Aorta (tissue), 5 donors: ENCODE measurements at regions of chr3 and their contacts with region 1.

Region 1: GRCh38 chr3:129560901-129561594 is 18.1 kb downstream of the H1-8 start:
- DNase-seq: peak; percentile 93 to 95
- ATAC-seq: peak; percentile 86
- H3K4me3 ChIP-seq: no peak overlapping the region
- H3K27ac ChIP-seq: peak overlapping the region; percentile 67 to 83
- H3K4me1 ChIP-seq: no peaks in the 10 kb centered on the region
- H3K27me3 ChIP-seq: no peaks in the 10 kb centered on the region

Region 2: GRCh38 chr3:129490242-129491045 is 70.6 kb before region 1 on chr3:
- intact Hi-C with region 1: loop called in 1 of 2 experiments (anchors 5 kb)
- DNase-seq: peak; percentile 92 to 95
- ATAC-seq: peak; percentile 92
- H3K4me3 ChIP-seq: no peak overlapping the region
- H3K27ac ChIP-seq: peak overlapping the region; percentile 62 to 86
- H3K4me1 ChIP-seq: peaks cover 0 to 2% of the 10 kb centered on the region in 2 donors
- H3K27me3 ChIP-seq: no peaks in the 10 kb centered on the region

Region 3: DNA sequence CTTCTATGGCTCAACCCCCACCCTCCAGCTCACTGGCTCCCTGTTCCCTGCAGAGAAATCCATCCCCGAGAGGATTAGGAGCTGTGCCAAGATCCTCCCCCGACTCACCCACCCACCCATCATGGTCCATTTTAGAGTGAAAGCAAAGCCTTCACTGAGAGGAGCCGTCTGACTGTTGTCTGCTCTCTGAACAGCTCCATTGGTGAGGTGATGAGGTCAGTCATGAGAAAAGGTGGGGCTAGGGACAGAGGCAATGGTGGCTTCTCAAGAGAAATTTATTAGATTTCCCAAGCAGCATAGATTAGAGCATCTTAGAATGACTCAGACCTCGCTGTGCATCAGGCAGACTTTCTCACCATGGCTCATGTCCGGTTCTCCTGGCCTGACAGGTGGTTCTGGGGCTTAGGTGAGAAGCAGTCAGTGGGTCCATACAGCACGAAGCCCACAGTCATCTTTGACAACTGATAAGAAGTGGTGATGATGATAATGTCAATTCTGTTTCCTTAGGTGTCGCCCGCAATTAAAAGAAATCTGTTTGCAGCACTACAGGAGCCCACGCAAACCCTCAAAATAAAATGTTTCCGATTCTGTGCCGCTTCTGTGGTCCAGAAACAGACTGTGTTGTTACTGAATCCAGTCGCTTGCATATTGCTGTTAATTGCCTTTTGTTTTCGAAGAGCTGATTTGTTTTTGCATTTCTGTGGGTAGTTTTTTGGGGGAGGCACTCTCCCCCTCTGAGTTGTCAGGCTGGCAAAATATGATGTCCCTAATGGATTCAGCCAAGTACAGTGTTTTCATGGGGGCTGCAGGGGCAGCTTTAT is 57.4 kb before region 1 on chr3:
- intact Hi-C with region 1: loop called in 1 of 2 experiments (anchors 5 kb)
- DNase-seq: no peak
- ATAC-seq: no peak
- H3K4me3 ChIP-seq: no peak overlapping the region
- H3K27ac ChIP-seq: no peak overlapping the region
- H3K4me1 ChIP-seq: no peaks in the 10 kb centered on the region
- H3K27me3 ChIP-seq: no peaks in the 10 kb centered on the region

Region 4: DNA sequence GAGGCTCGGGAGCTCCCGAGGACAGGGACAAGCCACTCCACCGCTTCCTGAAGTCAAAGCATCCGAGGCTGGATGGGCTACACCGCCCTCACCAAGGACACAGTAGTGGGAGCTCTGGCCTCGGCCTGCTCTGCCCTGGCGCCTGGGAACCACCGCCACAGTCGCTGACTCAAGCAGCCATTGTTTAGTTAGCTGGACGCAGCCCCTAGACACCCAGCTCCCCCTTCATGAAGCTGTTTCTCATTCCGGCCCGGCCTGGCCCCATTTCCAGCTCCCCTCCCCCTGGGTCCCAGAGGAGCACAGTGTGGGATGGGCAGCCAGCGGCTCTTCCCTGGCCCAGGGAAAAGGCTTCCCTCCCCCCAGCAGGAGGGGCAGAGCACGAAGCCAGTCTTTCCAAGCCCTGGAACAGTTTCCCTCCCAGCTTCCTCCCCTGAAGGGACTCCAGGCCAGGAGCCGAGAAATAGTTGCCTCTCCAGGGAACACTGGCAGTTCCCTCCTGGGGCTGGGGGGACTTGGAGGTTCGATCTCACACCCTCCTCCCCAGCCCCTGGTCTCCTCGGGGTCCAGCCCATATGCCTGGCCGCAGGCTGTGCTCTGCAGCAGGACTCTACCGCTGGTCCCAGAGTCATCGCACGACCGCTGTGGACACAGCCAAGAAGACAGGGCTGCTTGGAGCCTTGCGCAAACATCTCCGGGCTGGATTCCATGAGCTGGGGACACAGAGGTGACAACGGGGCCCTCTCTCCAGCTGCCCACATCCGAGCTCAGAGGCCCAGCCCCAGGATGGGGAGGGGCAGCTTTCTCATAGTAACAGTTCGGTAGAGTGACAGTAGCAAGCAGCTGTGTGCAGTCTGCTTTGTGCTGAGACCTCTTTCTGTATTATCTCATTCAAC is 35.4 kb after region 1 on chr3:
- intact Hi-C with region 1: loop called (anchors 2 to 5 kb)
- DNase-seq: peak; percentile 94 to 96
- ATAC-seq: peak; percentile 88
- H3K4me3 ChIP-seq: no peak overlapping the region
- H3K27ac ChIP-seq: peak overlapping the region; percentile 6 to 79
- H3K4me1 ChIP-seq: no peaks in the 10 kb centered on the region
- H3K27me3 ChIP-seq: no peaks in the 10 kb centered on the region

Region 5: DNA sequence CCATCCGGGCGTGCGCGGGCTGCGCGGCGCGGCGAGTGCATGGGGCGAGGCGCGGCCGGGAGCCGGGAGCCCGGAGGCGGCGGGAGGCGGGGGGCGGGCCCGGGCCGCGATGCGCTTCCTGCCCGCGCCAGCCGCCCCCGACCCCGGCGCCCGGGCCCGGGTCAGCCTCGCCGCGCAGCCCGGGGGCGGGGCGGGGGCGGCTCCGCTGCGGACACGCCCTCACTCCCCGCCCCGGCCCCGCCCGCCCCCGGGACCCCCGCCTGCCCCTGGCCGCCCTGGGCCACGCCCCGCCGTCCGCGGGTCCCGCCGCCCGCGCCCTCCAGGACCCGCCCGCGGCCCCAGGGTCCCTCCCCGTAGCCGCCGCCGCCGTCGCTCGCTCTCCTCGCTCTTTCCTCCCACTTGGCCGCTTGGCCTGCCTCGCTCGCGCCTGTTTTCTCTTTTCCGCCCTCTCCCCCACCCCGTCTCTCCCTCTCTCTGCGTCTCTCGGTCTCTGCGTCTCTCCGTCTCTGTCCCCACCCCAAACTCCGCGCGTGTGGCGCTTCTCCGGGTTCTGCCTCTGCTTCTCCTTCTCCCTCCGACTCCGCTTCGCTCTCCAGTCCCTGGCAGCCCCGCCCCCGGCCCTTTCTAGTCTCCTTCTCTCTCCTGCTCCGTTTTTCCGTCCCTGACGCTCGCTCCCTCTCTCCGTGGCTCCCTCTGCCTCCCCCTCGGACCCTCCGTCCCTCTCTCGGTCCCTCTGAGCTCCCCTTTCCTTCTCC is 45.8 kb after region 1 on chr3 and contains the start of gene PLXND1:
- intact Hi-C with region 1: loop called in 1 of 2 experiments (anchors 5 kb)
- DNase-seq: peak; percentile 90 to 91
- ATAC-seq: peak; percentile 79
- H3K4me3 ChIP-seq: peak within 1 kb of the TSS; percentile 31 to 59
- H3K27ac ChIP-seq: peak within 1 kb of the TSS in 1 of 2 donors; percentile 95
- H3K4me1 ChIP-seq: no peaks in the 10 kb centered on the region
- H3K27me3 ChIP-seq: no peaks in the 10 kb centered on the region
- total RNA-seq, gene PLXND1: 176 to 358 TPM